PC-3 (cell line): ENCODE measurements at regions of chr9 and their contacts with region 1.

Region 1: DNA sequence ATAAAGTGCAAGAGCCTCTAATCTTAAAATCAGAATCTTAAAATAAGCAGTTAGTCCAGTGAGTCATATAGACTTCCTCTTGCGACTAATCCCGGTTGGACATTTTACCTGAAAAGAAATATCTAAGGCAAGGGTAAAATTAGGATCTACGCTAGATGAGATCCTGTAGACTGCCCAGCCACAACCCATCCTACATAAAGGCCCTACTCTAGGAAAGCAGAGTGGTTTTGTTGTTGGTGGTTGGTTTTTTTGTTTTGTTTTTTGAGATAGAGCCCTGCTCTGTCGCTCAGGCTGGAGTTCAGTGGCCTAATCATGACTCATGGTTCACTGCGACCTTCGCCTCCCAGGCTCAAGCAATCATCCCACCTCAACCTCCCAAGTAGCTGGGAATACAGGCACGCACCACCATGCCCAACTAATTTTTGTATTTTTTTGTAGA is 6.9 kb downstream of the TSC1 start:
- DNase-seq: peak; percentile 58
- ATAC-seq: peak; percentile 84
- H3K4me3 ChIP-seq: peak overlapping the region; percentile 7; the same call in 1 of the 2 replicates
- H3K27ac ChIP-seq: peak overlapping the region; percentile 74
- H3K4me1 ChIP-seq: peaks cover 19% of the 10 kb centered on the region
- H3K27me3 ChIP-seq: no peaks in the 10 kb centered on the region
- CTCF ChIP-seq: no peak

Region 2: GRCh38 chr9:133004091-133004998 is 66.9 kb after region 1 on chr9:
- CTCF ChIA-PET with region 1: no interaction called
- POLR2A ChIA-PET with region 1: no interaction called
- intact Hi-C with region 1: loop called (anchors 2 kb)
- DNase-seq: no peak
- ATAC-seq: no peak
- H3K4me3 ChIP-seq: no peak overlapping the region
- H3K27ac ChIP-seq: no peak overlapping the region
- H3K4me1 ChIP-seq: no peaks in the 10 kb centered on the region
- H3K27me3 ChIP-seq: 0 out of 2 replicates have a peak, but pooled peaks cover 5% of the 10 kb centered on the region
- CTCF ChIP-seq: no peak